ENCODE measurements at regions of chr11 and their contacts with region 1.

Region 1: GRCh38 chr11:119323538-119324033 is 6.7 kb upstream of the MCAM start:
- DNase-seq: peak; percentile 94
- ATAC-seq: no peak
- H3K4me3 Mint-ChIP-seq: no peak overlapping the region
- H3K27ac Mint-ChIP-seq: no peak overlapping the region
- H3K4me1 Mint-ChIP-seq: peaks cover 18% of the 10 kb centered on the region
- H3K27me3 Mint-ChIP-seq: peaks cover 3% of the 10 kb centered on the region
- CTCF ChIP-seq: peak; percentile 90

Region 2: DNA sequence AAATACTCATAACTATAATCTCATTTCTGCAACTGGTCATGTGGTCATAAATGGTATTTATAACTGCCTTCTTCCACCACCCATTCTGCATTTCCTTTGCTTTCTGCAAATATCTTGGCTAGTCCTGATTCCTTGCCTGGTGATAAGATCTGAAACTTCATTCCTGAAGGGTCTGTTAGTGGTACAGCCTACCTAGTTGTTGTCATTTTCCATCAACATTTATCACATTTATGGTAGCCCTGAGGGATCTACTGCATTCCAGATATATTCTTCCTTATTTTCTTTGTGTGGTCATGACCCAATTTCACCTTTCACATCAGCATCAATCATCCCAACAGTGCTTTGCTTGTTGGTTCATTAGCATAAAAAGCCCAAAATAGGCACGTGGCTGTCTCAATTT is 582.7 kb before region 1 on chr11:
- CTCF ChIA-PET with region 1: no interaction called
- POLR2A ChIA-PET with region 1: no interaction called
- intact Hi-C with region 1: no loop called
- DNase-seq: no peak
- ATAC-seq: no peak
- H3K4me3 Mint-ChIP-seq: no peak overlapping the region
- H3K27ac Mint-ChIP-seq: no peak overlapping the region
- H3K4me1 Mint-ChIP-seq: no peaks in the 10 kb centered on the region
- H3K27me3 Mint-ChIP-seq: no peaks in the 10 kb centered on the region
- CTCF ChIP-seq: no peak

Region 3: GRCh38 chr11:119067371-119068222 is 256.0 kb before region 1 on chr11 and contains the start of gene VPS11:
- CTCF ChIA-PET with region 1: interaction called, 11 read pairs
- POLR2A ChIA-PET with region 1: no interaction called
- intact Hi-C with region 1: no loop called
- DNase-seq: peak; percentile 99
- ATAC-seq: peak; percentile 98
- H3K4me3 Mint-ChIP-seq: peak within 1 kb of the TSS; percentile 87
- H3K27ac Mint-ChIP-seq: peak within 1 kb of the TSS; percentile 94
- H3K4me1 Mint-ChIP-seq: peaks cover 34% of the 10 kb centered on the region
- H3K27me3 Mint-ChIP-seq: no peaks in the 10 kb centered on the region
- CTCF ChIP-seq: no peak
- total RNA-seq, gene VPS11: 17.1 to 17.2 TPM

Region 4: GRCh38 chr11:119178166-119178680 is 145.4 kb before region 1 on chr11:
- CTCF ChIA-PET with region 1: interaction called, 10 read pairs
- POLR2A ChIA-PET with region 1: no interaction called
- intact Hi-C with region 1: no loop called
- DNase-seq: no peak
- ATAC-seq: no peak
- H3K4me3 Mint-ChIP-seq: no peak overlapping the region
- H3K27ac Mint-ChIP-seq: no peak overlapping the region
- H3K4me1 Mint-ChIP-seq: peaks cover 15% of the 10 kb centered on the region
- H3K27me3 Mint-ChIP-seq: no peaks in the 10 kb centered on the region
- CTCF ChIP-seq: no peak

Region 5: DNA sequence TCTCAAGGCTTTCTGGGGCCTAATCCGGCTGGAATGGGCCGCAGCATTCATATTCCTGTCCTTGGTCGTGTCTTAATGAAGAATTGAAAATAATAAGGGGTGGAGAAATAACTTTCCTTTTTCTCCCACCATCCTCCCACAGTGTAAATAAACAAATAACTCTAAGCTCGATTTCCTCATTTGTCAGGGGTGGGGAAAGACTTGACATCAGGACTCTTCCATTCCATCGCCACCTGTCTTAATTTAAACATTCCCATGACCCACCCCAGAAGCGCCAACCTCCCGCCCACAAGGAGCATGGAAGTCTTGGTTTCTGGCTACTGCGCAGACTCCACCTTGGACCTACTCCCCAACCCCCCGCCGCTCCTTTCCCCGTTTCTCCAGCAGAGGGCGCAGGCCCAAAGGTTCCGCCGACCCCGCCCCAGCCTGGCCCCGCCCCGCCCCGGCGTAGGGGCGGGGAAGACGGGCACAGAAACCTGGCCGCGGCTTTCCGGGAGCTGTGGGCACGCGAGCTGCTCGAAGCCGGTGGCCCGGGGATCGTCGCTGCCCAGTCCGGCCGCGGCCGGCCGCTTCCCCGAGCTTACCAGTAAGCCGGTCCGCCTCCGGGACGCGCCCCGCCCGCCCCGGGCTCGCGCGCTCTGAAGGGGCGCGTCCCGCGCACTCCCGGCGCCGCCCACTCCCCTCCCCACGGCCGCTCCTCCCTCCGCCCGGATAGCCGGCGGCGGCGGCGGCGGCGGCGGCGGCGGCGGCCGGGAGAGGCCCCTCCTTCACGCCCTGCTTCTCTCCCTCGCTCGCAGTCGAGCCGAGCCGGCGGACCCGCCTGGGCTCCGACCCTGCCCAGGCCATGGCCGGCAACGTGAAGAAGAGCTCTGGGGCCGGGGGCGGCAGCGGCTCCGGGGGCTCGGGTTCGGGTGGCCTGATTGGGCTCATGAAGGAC is 117.7 kb before region 1 on chr11 and contains the start of gene CBL:
- CTCF ChIA-PET with region 1: interaction called, 50 read pairs
- POLR2A ChIA-PET with region 1: interaction called, 15 read pairs
- intact Hi-C with region 1: loop called (anchors 10 kb)
- DNase-seq: peak; percentile 97
- ATAC-seq: peak; percentile 91
- H3K4me3 Mint-ChIP-seq: peak within 1 kb of the TSS; percentile 90
- H3K27ac Mint-ChIP-seq: peak within 1 kb of the TSS; percentile 93
- H3K4me1 Mint-ChIP-seq: peaks cover 23% of the 10 kb centered on the region
- H3K27me3 Mint-ChIP-seq: no peaks in the 10 kb centered on the region
- CTCF ChIP-seq: peak; percentile 84
- total RNA-seq, gene CBL: 27.0 to 27.5 TPM

Region 6: DNA sequence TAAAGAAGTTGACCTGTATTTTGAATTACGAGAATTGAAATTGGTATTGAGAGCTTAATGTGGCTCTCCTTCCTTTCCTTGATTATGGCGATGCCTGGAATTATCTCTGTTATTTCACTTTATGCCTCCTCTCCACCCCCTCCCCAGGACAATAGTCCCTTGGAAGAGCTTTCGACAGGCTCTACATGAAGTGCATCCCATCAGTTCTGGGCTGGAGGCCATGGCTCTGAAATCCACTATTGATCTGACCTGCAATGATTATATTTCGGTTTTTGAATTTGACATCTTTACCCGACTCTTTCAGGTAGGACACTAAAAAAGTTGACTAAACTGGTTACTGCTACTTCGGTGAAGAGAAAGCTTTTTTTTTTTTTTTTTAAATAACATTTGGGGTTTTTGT is 49.9 kb before region 1 on chr11:
- CTCF ChIA-PET with region 1: interaction called, 11 read pairs
- POLR2A ChIA-PET with region 1: no interaction called
- intact Hi-C with region 1: loop called (anchors 2 kb)
- DNase-seq: no peak
- ATAC-seq: no peak
- H3K4me3 Mint-ChIP-seq: no peak overlapping the region
- H3K27ac Mint-ChIP-seq: no peak overlapping the region
- H3K4me1 Mint-ChIP-seq: peaks cover 12% of the 10 kb centered on the region
- H3K27me3 Mint-ChIP-seq: no peaks in the 10 kb centered on the region
- CTCF ChIP-seq: no peak

Region 7: DNA sequence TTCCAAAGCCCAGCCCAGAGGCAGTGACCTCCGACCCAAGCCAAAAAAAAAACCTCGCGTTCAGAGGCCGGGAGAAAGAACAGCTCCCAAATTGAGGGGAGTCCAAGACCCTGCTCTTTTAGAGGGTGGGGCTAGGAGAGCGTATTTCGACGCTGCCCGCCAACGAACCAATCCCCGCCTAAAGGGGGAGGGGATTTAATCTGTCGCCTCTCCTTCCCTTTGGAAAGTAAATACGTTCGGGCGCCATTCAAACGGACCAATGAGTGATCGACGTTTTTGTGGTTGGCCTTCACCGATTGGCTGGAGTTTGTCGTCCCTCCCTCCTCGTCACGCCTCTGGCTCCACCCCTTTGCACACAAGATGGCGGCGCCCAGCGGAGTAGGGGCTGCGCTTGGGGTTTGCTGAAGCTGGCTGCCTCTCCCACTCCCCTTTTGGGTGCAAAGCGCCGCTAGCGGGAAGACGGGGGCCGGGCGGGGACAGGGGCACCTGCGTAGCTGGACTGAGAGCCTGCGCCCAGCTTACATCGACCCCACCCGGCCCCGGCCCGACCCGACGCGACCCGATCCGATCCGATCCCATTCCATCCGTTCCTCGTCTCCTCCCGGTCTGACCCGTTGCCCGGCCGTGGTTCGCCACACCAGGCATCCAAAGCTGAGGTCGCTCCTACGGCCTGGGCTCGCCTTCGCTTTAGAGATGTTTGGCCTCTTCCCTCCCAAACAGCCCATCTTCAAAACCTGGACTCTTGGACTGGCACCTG is 10.8 kb after region 1 on chr11 and contains the start of gene RNF26:
- CTCF ChIA-PET with region 1: interaction called, 201 read pairs
- POLR2A ChIA-PET with region 1: interaction called, 11 read pairs
- intact Hi-C with region 1: no loop called
- DNase-seq: peak; percentile 97
- ATAC-seq: peak; percentile 95
- H3K4me3 Mint-ChIP-seq: peak within 1 kb of the TSS; percentile 98
- H3K27ac Mint-ChIP-seq: peak within 1 kb of the TSS; percentile 99
- H3K4me1 Mint-ChIP-seq: peaks cover 44% of the 10 kb centered on the region
- H3K27me3 Mint-ChIP-seq: peaks cover 9% of the 10 kb centered on the region
- CTCF ChIP-seq: no peak
- total RNA-seq, gene RNF26: 30.2 to 31.9 TPM

Region 8: DNA sequence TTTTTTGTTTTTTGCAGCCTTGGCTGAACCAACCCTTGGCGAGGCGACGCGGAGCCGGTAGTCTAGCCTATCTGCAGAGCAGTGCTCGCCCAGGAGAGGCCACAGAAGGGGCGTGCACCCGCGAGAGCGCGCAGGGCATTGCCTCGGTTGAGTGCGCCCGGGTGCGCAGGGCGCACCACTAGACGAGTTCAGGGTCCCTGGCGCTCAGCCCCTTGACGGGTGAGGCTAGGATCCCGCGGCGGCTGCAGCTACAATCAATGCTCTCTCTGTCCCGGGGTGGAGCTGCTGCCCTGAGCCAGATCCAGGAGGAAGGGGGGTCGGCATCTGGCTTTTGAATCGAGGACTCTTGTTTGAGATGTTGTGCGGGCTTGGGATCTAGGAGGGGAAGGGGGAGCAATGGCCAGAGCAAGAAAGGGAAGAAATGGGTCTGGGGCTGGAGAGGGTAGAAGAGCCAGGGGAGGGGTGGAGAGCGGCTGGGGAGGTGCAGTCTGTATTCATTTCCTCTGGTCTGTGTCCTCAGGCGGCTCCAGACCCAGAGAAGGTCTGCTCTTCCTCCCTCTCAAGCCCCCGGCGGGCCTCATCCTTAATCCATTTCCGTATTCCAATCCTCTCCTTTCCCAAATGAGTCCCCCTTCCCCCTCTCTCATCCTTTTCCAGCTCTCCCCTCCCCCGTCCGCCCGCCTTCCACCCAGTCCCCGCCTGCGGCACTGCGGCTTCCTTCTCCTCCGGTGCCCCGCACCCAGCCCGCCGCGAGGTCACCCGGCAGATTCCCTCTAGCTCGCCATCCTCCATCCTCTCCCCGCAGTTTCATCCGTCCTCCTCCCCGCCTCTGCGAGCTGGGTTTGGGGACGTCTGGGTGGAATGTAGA is 98.6 kb after region 1 on chr11:
- CTCF ChIA-PET with region 1: no interaction called
- POLR2A ChIA-PET with region 1: no interaction called
- intact Hi-C with region 1: no loop called
- DNase-seq: peak; percentile 21
- ATAC-seq: peak; percentile 46
- H3K4me3 Mint-ChIP-seq: peak overlapping the region; percentile 19
- H3K27ac Mint-ChIP-seq: no peak overlapping the region
- H3K4me1 Mint-ChIP-seq: peaks cover 14% of the 10 kb centered on the region
- H3K27me3 Mint-ChIP-seq: peaks cover 46% of the 10 kb centered on the region
- CTCF ChIP-seq: no peak